Naive thymus-derived CD4-positive, alpha-beta T cell (primary cell): ENCODE measurements at regions of chr18 and their contacts with region 1.

Region 1: GRCh38 chr18:9082711-9083510 is 19.6 kb upstream of the NDUFV2 start:
- DNase-seq: peak in 8 of 9 donors; percentile 16 to 52 (median 34)
- ATAC-seq: peak; percentile 86
- H3K4me3 ChIP-seq: peak overlapping the region; percentile 18
- H3K4me3 Mint-ChIP-seq: peak overlapping the region; percentile 42 to 88 (median 72)
- H3K27ac ChIP-seq: peak overlapping the region; percentile 76
- H3K27ac Mint-ChIP-seq: peak overlapping the region; percentile 82 to 98 (median 94)
- H3K4me1 ChIP-seq: peaks cover 10 to 19% of the 10 kb centered on the region in 2 donors
- H3K4me1 Mint-ChIP-seq: peaks cover 19 to 51% (median 44%) of the 10 kb centered on the region in 7 donors
- H3K27me3 ChIP-seq: no peaks in the 10 kb centered on the region
- H3K27me3 Mint-ChIP-seq: no peaks in the 10 kb centered on the region

Region 2: DNA sequence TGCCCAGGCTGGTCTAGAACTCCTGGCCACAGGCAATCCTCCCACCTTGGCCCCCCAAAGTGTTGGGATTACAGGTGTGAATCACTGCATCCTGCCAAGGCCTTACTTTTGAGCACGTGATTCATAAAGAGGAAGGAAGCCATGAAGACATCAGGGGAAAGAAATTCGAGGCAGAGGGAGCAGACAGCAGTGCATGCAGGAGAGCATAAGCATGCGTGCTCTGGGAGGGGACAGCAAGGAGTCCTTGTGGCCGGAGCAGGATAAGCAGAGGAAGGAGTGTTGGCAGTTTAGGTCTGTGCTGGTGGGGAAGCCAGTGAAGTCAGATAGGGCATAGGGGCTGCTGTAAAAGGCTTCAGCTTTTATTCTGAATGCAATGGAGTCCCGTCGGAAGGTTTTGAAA is 874.2 kb before region 1 on chr18:
- CTCF ChIA-PET with region 1: no interaction called
- POLR2A ChIA-PET with region 1: no interaction called
- intact Hi-C with region 1: no loop called
- DNase-seq: no peak
- ATAC-seq: no peak
- H3K4me3 ChIP-seq: no peak overlapping the region
- H3K4me3 Mint-ChIP-seq: no peak overlapping the region
- H3K27ac ChIP-seq: no peak overlapping the region
- H3K27ac Mint-ChIP-seq: no peak overlapping the region
- H3K4me1 ChIP-seq: no peaks in the 10 kb centered on the region
- H3K4me1 Mint-ChIP-seq: no peaks in the 10 kb centered on the region
- H3K27me3 ChIP-seq: no peaks in the 10 kb centered on the region
- H3K27me3 Mint-ChIP-seq: no peaks in the 10 kb centered on the region

Region 3: DNA sequence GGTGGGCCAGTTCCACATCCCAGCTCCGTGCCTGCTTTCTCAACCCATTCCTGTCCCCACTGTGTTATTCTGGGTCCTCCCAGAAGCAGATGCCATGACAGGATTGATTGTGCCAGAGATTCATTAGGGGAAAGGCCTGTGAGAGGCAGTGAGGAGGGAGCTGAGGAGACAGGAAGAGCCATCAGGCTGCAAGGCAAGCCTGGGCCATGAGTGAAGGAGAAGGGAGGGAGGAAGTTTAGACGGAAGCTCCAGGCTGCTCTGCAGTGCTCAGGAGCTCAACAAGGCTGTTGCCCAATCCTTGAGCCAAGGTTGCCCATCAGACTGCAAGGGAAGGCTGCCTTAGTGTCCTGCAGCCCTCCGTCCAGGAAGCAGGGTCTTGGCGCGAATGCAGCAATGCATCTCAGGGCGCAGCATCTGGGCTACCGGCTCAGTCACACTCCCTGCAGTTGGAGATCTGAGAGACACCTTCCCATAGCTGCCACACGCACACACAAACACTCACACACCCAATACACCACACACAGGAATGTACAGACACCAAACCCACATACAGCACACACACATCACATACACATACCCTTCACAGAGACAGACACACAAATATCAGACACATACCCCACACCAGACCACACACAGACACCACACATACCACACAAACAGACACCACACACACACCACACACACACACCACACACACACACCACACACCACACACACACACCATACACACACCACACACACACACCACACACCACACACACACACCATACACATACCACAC is 119.9 kb before region 1 on chr18:
- CTCF ChIA-PET with region 1: no interaction called
- POLR2A ChIA-PET with region 1: no interaction called
- intact Hi-C with region 1: no loop called
- DNase-seq: no peak
- ATAC-seq: no peak
- H3K4me3 ChIP-seq: no peak overlapping the region
- H3K4me3 Mint-ChIP-seq: no peak overlapping the region
- H3K27ac ChIP-seq: no peak overlapping the region
- H3K27ac Mint-ChIP-seq: no peak overlapping the region
- H3K4me1 ChIP-seq: no peaks in the 10 kb centered on the region
- H3K4me1 Mint-ChIP-seq: peaks cover 0 to 5% (median 0%) of the 10 kb centered on the region in 7 donors
- H3K27me3 ChIP-seq: peaks cover 0 to under 1% of the 10 kb centered on the region in 2 donors
- H3K27me3 Mint-ChIP-seq: peaks cover 0 to 21% (median 2%) of the 10 kb centered on the region in 5 donors

Region 4: GRCh38 chr18:9095297-9096006 is 12.5 kb after region 1 on chr18:
- CTCF ChIA-PET with region 1: interaction called, 5 read pairs
- POLR2A ChIA-PET with region 1: interaction called, 61 read pairs
- intact Hi-C with region 1: loop called (anchors 1 kb)
- DNase-seq: peak in 8 of 9 donors; percentile 46 to 71 (median 58)
- ATAC-seq: peak; percentile 57
- H3K4me3 ChIP-seq: peak overlapping the region; percentile 26
- H3K4me3 Mint-ChIP-seq: peak overlapping the region; percentile 48 to 80 (median 70)
- H3K27ac ChIP-seq: peak overlapping the region; percentile 64
- H3K27ac Mint-ChIP-seq: peak overlapping the region; percentile 88 to 99 (median 92)
- H3K4me1 ChIP-seq: peaks cover 25 to 49% of the 10 kb centered on the region in 2 donors
- H3K4me1 Mint-ChIP-seq: peaks cover 34 to 68% (median 61%) of the 10 kb centered on the region in 7 donors
- H3K27me3 ChIP-seq: no peaks in the 10 kb centered on the region
- H3K27me3 Mint-ChIP-seq: no peaks in the 10 kb centered on the region

Region 5: DNA sequence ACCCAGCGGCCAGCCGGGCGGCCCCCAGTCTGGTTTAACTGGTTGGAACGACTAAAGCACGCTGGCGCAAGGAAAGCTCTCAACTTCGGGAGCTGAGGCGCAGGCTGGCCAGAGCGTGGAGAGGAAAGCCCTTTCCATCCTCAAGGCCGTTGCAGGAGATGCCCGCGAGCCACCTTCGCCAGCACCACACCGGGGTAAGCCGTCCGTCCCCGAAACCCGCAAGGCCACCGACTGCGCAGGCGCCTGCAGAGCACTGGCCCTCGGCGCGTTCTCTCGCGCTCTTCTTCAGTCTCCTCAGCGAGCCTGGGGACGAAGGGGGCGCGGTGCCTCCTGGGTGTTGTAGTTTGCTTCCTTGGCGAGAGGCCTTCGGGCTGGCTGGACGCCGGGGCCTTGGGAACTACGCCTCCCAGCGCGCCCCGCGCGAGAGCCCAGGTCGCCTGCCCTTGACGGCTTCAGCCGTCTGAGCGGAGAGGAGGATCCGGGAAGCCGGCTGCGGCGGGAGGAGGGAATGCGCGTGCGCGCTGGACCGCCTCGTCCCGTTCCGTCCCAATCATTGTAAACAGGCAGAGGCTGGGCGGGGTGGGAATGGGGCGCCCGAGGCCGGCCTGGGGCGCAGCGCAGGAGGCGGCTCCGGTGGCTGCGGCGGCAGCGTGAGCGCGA is 392.2 kb after region 1 on chr18 and contains the start of gene RALBP1:
- CTCF ChIA-PET with region 1: no interaction called
- POLR2A ChIA-PET with region 1: no interaction called
- intact Hi-C with region 1: loop called in 1 of 2 experiments (anchors 5 kb)
- DNase-seq: peak; percentile 92 to 98 (median 96)
- ATAC-seq: peak; percentile 99
- H3K4me3 ChIP-seq: peak within 1 kb of the TSS; percentile 88
- H3K4me3 Mint-ChIP-seq: peak within 1 kb of the TSS; percentile 84 to 99 (median 97)
- H3K27ac ChIP-seq: peak within 1 kb of the TSS; percentile 81
- H3K27ac Mint-ChIP-seq: peak within 1 kb of the TSS; percentile 82 to 97 (median 94)
- H3K4me1 ChIP-seq: peaks cover 0 to 14% of the 10 kb centered on the region in 2 donors
- H3K4me1 Mint-ChIP-seq: peaks cover 21 to 41% (median 30%) of the 10 kb centered on the region in 7 donors
- H3K27me3 ChIP-seq: no peaks in the 10 kb centered on the region
- H3K27me3 Mint-ChIP-seq: peaks cover 0 to 24% (median 5%) of the 10 kb centered on the region in 5 donors
- total RNA-seq, gene RALBP1: 20.3 to 47.8 (median 42.2) TPM